A673 (cell line): ENCODE measurements at regions of chr4 and their contacts with region 1.

Region 1: DNA sequence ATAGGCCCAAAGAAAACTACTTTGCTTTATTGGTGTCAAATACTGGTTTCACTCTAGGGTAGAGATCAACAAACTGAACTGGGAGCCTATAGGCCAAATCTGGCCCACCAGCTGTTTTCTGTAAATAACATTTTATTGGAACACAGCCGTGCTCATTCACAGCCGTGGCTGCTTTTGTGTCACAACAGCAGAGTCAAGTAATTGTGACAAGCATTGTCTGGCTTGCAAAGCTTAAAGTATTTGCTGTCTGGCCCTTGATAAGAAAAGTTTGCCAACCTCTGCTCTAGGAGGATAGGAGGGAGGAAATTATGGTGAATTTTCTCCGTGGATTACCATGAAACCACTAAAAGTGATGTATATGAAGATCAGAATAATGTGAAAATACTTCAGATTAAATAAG is 53.4 kb downstream of the GPAT3 start:
- DNase-seq: no peak
- H3K4me3 ChIP-seq: no peak overlapping the region
- H3K27ac ChIP-seq: no peak overlapping the region
- H3K4me1 ChIP-seq: no peaks in the 10 kb centered on the region
- H3K27me3 ChIP-seq: no peaks in the 10 kb centered on the region
- CTCF ChIP-seq: no peak

Region 2: GRCh38 chr4:83535520-83536361 is 53.5 kb before region 1 on chr4 and contains the start of gene GPAT3:
- CTCF ChIA-PET with region 1: no interaction called
- POLR2A ChIA-PET with region 1: interaction called, 17 read pairs
- intact Hi-C with region 1: no loop called
- DNase-seq: peak; percentile 36
- H3K4me3 ChIP-seq: peak within 1 kb of the TSS; percentile 58
- H3K27ac ChIP-seq: no peak within 1 kb of the TSS
- H3K4me1 ChIP-seq: no peaks in the 10 kb centered on the region
- H3K27me3 ChIP-seq: no peaks in the 10 kb centered on the region
- CTCF ChIP-seq: no peak
- total RNA-seq, gene GPAT3: 0.74 and 1.2 TPM in 2 replicates

Region 3: GRCh38 chr4:83651502-83652245 is 62.4 kb after region 1 on chr4:
- CTCF ChIA-PET with region 1: no interaction called
- POLR2A ChIA-PET with region 1: no interaction called
- intact Hi-C with region 1: no loop called
- DNase-seq: no peak
- H3K4me3 ChIP-seq: no peak overlapping the region
- H3K27ac ChIP-seq: no peak overlapping the region
- H3K4me1 ChIP-seq: peaks cover 5% of the 10 kb centered on the region
- H3K27me3 ChIP-seq: no peaks in the 10 kb centered on the region
- CTCF ChIP-seq: no peak